ENCODE measurements at regions of chr2 and their contacts with region 1.

Region 1: GRCh38 chr2:189347540-189347939 is 93.7 kb upstream of the WDR75 start:
- DNase-seq: peak; percentile 56
- ATAC-seq: peak; percentile 69
- H3K4me3 ChIP-seq: no peak overlapping the region
- H3K27ac ChIP-seq: no peak overlapping the region
- H3K4me1 ChIP-seq: no peaks in the 10 kb centered on the region
- H3K27me3 ChIP-seq: no peaks in the 10 kb centered on the region
- CTCF ChIP-seq: peak; percentile 57
- EP300 ChIP-seq: no peak
- POLR2A ChIP-seq: no peak
- RAD21 ChIP-seq: 0 out of 2 replicates have a peak, but pooled peaks have one; percentile 14

Region 2: DNA sequence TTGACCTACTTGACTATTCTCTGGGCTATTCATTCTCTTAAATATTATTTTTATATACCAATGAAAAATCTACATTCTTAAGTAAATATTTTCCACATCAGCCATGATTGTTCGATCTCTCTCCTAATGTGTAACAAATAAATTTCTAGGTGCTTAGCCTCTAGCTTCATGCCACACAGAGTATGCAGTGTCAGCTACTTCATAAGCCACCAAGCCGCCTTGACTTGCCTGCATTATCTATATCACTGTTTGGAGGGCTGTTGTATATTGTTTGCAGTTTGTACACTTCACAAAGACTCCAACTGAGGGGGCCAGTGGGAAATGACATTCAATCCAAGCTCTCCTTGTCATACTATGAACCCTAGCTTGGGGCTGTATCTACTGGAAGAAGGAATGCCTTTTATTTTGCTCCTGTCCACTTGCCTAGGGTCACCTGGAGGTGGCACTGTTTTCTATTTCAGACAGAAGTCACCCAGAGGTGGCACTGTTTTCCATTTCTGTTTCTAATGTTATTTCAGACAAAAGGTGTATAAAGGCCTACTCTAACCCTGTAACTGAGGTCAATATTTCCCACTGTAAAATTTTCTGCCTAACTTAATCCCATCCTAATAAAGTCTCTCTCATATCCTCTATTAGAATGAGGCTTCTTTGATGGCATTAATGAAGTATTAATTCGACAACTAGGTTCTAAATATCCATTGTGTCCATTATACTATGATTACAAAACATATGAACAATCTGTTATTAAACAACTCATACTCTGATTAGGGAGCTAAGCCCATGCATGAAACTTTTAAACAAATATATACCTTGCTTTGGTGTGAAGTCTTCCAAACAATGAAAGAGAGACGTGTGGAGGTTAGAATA is 204.4 kb before region 1 on chr2:
- CTCF ChIA-PET with region 1: interaction called, 10 read pairs
- POLR2A ChIA-PET with region 1: no interaction called
- in situ Hi-C with region 1: no loop called
- intact Hi-C with region 1: loop called (anchors 1 kb)
- DNase-seq: peak; percentile 76
- ATAC-seq: peak; percentile 100
- H3K4me3 ChIP-seq: no peak overlapping the region
- H3K27ac ChIP-seq: no peak overlapping the region
- H3K4me1 ChIP-seq: no peaks in the 10 kb centered on the region
- H3K27me3 ChIP-seq: no peaks in the 10 kb centered on the region
- CTCF ChIP-seq: peak; percentile 87
- EP300 ChIP-seq: no peak
- POLR2A ChIP-seq: no peak
- RAD21 ChIP-seq: peak; percentile 79

Region 3: GRCh38 chr2:189287982-189288521 is 59.5 kb before region 1 on chr2:
- CTCF ChIA-PET with region 1: no interaction called
- POLR2A ChIA-PET with region 1: no interaction called
- in situ Hi-C with region 1: no loop called
- intact Hi-C with region 1: no loop called
- DNase-seq: peak; percentile 49
- ATAC-seq: peak; percentile 72
- H3K4me3 ChIP-seq: no peak overlapping the region
- H3K27ac ChIP-seq: no peak overlapping the region
- H3K4me1 ChIP-seq: no peaks in the 10 kb centered on the region
- H3K27me3 ChIP-seq: no peaks in the 10 kb centered on the region
- CTCF ChIP-seq: peak; percentile 59
- EP300 ChIP-seq: no peak
- POLR2A ChIP-seq: no peak
- RAD21 ChIP-seq: peak; percentile 36; the same call in 1 of the 2 replicates